ENCODE measurements at regions of chr4 and their contacts with region 1.

Region 1: DNA sequence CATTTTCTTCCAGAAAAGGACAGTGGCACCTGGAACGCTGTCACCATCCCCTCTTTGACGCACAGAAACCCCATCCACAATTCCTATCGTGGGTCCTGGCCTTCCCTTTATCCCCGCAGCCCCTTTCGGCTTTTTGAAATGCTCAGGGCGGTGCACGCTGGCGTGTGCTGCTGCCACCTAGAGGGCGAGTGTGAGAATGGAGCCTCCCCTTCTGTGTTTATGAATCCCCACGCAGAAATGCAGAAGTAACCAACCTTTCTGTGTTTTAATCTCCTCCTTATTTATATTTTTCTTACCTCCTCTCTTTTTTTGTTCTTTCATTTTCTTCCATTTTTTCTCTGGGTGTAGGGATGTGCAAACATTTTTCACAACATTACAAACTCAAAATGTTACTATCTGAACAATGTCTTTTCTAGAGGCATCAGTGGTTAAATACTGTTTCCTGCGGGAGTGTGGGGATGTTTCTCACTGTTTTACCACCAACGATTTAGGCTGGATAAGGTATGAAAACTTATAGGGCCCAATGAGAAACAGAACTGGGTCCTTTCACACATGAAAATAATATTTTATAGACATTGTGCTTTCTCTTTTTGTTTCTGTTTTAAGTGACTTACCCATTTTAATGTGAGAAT is 50.0 kb downstream of the TMA16 start:
- DNase-seq: peak; percentile 84
- ATAC-seq: peak; percentile 88
- H3K4me3 ChIP-seq: no peak overlapping the region
- H3K4me3 Mint-ChIP-seq: no peak overlapping the region
- H3K27ac ChIP-seq: peak overlapping the region; percentile 17 to 58
- H3K27ac Mint-ChIP-seq: no peak overlapping the region
- H3K4me1 ChIP-seq: peaks cover 27 to 28% of the 10 kb centered on the region in 2 donors
- H3K4me1 Mint-ChIP-seq: peaks cover 23% of the 10 kb centered on the region
- H3K27me3 ChIP-seq: no peaks in the 10 kb centered on the region
- H3K27me3 Mint-ChIP-seq: no peaks in the 10 kb centered on the region
- CTCF ChIP-seq: peak; percentile 95

Region 2: DNA sequence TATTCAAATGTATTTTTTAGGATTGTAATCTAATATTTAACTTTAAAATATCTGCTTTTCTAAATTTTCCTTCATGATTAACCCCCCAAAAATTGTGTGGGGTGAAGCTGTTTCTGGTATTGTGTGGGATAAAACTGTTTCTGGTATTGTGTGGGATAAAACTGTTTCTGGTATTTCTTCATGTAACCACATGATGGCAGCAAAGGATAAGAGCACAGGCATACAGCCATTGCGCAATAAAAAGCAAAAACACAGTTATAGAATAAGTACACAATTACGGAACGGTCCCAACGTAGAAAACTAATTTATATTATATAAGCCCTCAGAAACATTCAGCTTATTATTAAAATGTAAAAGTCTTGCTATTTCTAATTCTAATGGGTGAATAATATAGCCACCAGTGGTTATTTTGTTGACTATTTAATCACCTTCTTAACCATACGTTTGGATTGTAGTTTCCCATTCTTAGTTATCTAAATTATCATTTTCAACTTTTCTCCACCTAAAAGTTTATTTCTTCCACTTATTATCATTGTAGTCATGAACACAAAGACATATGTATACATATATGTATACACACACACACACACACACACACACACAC is 1046.9 kb before region 1 on chr4:
- CTCF ChIA-PET with region 1: interaction called, 7 read pairs
- POLR2A ChIA-PET with region 1: no interaction called
- intact Hi-C with region 1: loop called (anchors 5 kb)
- DNase-seq: peak; percentile 39
- ATAC-seq: no peak
- H3K4me3 ChIP-seq: no peak overlapping the region
- H3K4me3 Mint-ChIP-seq: no peak overlapping the region
- H3K27ac ChIP-seq: no peak overlapping the region
- H3K27ac Mint-ChIP-seq: no peak overlapping the region
- H3K4me1 ChIP-seq: no peaks in the 10 kb centered on the region
- H3K4me1 Mint-ChIP-seq: no peaks in the 10 kb centered on the region
- H3K27me3 ChIP-seq: no peaks in the 10 kb centered on the region
- H3K27me3 Mint-ChIP-seq: no peaks in the 10 kb centered on the region
- CTCF ChIP-seq: peak; percentile 93

Region 3: DNA sequence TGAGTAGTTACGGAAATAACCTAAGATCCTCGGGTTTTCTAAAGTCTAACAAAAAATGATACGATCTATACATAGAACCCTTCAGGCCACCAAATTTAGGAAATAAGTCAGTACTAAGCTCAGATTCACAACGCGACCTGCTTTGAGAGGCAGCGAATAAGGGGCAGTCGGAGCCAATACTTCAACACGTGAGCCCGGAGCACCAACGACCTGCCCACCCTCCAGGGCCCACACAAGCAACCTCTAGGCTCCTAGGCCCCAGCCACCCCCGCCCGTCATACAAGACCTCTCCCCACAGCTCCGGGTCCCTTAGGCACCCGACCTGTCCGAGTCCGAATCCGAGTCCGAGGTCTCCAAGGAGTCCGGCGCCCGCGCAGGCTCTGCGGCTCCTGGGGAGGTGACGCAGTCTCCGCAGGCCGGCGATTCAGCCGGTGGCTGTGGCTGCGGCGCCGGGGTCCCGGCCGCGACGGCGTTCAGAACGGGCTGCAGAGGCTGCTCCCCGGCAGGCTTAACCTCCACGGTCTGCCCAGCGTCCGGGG is 378.4 kb before region 1 on chr4:
- CTCF ChIA-PET with region 1: interaction called, 3 read pairs
- POLR2A ChIA-PET with region 1: no interaction called
- intact Hi-C with region 1: loop called (anchors 2 kb)
- DNase-seq: peak; percentile 78
- ATAC-seq: peak; percentile 56
- H3K4me3 ChIP-seq: peak overlapping the region; percentile 73 to 86 (median 83)
- H3K4me3 Mint-ChIP-seq: peak overlapping the region; percentile 97
- H3K27ac ChIP-seq: peak overlapping the region; percentile 91 to 94
- H3K27ac Mint-ChIP-seq: peak overlapping the region; percentile 98
- H3K4me1 ChIP-seq: peaks cover 15 to 18% of the 10 kb centered on the region in 2 donors
- H3K4me1 Mint-ChIP-seq: peaks cover 39% of the 10 kb centered on the region
- H3K27me3 ChIP-seq: no peaks in the 10 kb centered on the region
- H3K27me3 Mint-ChIP-seq: no peaks in the 10 kb centered on the region
- CTCF ChIP-seq: no peak

Region 4: DNA sequence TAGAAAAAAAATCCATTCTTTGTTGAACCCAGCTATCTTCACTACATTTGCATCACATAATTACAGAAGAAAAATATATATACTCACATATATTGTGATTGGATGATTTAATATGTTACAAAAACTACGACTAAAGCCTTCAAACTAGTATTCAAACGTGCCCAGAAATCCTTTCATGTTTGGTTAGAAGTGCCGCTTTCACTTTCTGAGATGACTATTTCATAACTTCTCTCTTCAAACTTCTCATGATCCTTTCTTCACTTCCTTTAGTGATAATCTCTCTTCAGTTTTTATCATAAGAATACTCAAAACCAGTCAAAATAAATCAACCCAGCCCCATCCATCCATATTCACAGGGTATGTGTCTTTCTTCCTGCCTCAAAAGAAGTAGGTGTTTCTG is 327.0 kb before region 1 on chr4:
- CTCF ChIA-PET with region 1: no interaction called
- POLR2A ChIA-PET with region 1: no interaction called
- intact Hi-C with region 1: no loop called
- DNase-seq: no peak
- ATAC-seq: no peak
- H3K4me3 ChIP-seq: no peak overlapping the region
- H3K4me3 Mint-ChIP-seq: no peak overlapping the region
- H3K27ac ChIP-seq: no peak overlapping the region
- H3K27ac Mint-ChIP-seq: no peak overlapping the region
- H3K4me1 ChIP-seq: no peaks in the 10 kb centered on the region
- H3K4me1 Mint-ChIP-seq: no peaks in the 10 kb centered on the region
- H3K27me3 ChIP-seq: no peaks in the 10 kb centered on the region
- H3K27me3 Mint-ChIP-seq: peaks cover 11% of the 10 kb centered on the region
- CTCF ChIP-seq: no peak

Region 5: DNA sequence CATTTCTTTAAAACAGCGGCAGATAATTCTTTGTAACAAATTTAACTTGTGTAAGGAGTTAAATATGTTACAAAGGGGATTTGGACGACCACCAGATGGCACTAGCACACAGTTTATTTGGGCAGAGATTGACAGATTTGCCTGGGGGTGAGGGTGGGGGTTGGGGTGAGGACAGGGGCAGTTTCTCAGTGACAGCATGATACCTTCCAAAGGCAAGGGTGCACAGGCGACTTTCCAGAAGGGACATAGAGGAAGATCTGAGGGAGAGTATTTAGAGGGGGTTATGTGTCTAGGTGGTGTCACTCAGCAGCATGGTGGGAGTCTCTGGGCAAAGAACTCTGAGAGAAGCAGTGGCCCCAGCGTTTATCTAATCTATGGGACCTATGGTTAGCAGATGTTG is 59.6 kb before region 1 on chr4:
- CTCF ChIA-PET with region 1: interaction called, 155 read pairs
- POLR2A ChIA-PET with region 1: no interaction called
- intact Hi-C with region 1: loop called (anchors 1 kb)
- DNase-seq: peak; percentile 80
- ATAC-seq: peak; percentile 82
- H3K4me3 ChIP-seq: no peak overlapping the region
- H3K4me3 Mint-ChIP-seq: no peak overlapping the region
- H3K27ac ChIP-seq: no peak overlapping the region
- H3K27ac Mint-ChIP-seq: no peak overlapping the region
- H3K4me1 ChIP-seq: peaks cover 18 to 27% of the 10 kb centered on the region in 2 donors
- H3K4me1 Mint-ChIP-seq: peaks cover 7% of the 10 kb centered on the region
- H3K27me3 ChIP-seq: no peaks in the 10 kb centered on the region
- H3K27me3 Mint-ChIP-seq: no peaks in the 10 kb centered on the region
- CTCF ChIP-seq: peak; percentile 88

Region 6: DNA sequence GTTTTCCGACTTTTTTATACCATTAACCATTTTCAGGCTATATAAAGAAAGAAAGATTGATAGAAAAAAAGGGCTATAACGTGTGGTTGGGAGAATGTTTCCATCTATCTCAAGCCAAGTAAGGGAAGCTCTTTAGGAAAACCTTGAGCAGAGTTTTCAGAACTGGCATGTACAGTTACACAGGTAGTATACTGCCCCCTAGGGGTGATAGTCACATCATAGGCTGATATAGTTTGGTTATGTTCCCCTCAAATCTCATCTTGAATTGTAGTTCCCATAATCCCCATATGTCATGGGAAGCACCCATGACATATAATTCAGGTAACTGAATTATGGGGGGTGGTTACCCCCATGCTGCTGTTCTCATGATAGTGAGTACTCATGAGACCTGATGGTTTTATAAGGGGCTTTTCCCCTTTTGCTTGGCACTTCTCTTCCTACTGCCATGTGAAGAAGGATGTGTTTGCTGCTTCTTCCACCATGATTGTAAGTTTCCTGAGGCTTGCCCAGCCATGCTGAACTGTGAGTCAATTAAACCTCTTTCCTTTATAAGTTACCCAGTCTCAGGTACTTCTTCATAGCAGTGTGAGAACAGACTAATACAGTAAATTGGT is 136.8 kb after region 1 on chr4:
- CTCF ChIA-PET with region 1: interaction called, 1,334 read pairs
- POLR2A ChIA-PET with region 1: interaction called, 10 read pairs
- intact Hi-C with region 1: no loop called
- DNase-seq: peak; percentile 80
- ATAC-seq: peak; percentile 85
- H3K4me3 ChIP-seq: no peak overlapping the region
- H3K4me3 Mint-ChIP-seq: no peak overlapping the region
- H3K27ac ChIP-seq: no peak overlapping the region
- H3K27ac Mint-ChIP-seq: peak overlapping the region; percentile 74
- H3K4me1 ChIP-seq: peaks cover 6 to 11% of the 10 kb centered on the region in 2 donors
- H3K4me1 Mint-ChIP-seq: peaks cover 24% of the 10 kb centered on the region
- H3K27me3 ChIP-seq: no peaks in the 10 kb centered on the region
- H3K27me3 Mint-ChIP-seq: no peaks in the 10 kb centered on the region
- CTCF ChIP-seq: peak; percentile 87

Region 7: GRCh38 chr4:163949976-163950601 is 405.6 kb after region 1 on chr4:
- CTCF ChIA-PET with region 1: no interaction called
- POLR2A ChIA-PET with region 1: no interaction called
- intact Hi-C with region 1: no loop called
- DNase-seq: no peak
- ATAC-seq: no peak
- H3K4me3 ChIP-seq: no peak overlapping the region
- H3K4me3 Mint-ChIP-seq: no peak overlapping the region
- H3K27ac ChIP-seq: no peak overlapping the region
- H3K27ac Mint-ChIP-seq: no peak overlapping the region
- H3K4me1 ChIP-seq: no peaks in the 10 kb centered on the region
- H3K4me1 Mint-ChIP-seq: no peaks in the 10 kb centered on the region
- H3K27me3 ChIP-seq: no peaks in the 10 kb centered on the region
- H3K27me3 Mint-ChIP-seq: no peaks in the 10 kb centered on the region
- CTCF ChIP-seq: no peak